SK-N-SH (cell line): ENCODE measurements at regions of chr6 and their contacts with region 1.

Region 1: GRCh38 chr6:44237813-44238433 is 9.0 kb upstream of the HSP90AB1 start:
- DNase-seq: peak; percentile 92
- H3K4me3 ChIP-seq: peak overlapping the region; percentile 53 to 62
- H3K27ac ChIP-seq: peak overlapping the region; percentile 84 to 90
- H3K4me1 ChIP-seq: peaks cover 26 to 45% of the 10 kb centered on the region in 2 experiments
- H3K27me3 ChIP-seq: no peaks in the 10 kb centered on the region
- CTCF ChIP-seq: peak; percentile 93
- EP300 ChIP-seq: no peak
- RAD21 ChIP-seq: peak; percentile 58

Region 2: DNA sequence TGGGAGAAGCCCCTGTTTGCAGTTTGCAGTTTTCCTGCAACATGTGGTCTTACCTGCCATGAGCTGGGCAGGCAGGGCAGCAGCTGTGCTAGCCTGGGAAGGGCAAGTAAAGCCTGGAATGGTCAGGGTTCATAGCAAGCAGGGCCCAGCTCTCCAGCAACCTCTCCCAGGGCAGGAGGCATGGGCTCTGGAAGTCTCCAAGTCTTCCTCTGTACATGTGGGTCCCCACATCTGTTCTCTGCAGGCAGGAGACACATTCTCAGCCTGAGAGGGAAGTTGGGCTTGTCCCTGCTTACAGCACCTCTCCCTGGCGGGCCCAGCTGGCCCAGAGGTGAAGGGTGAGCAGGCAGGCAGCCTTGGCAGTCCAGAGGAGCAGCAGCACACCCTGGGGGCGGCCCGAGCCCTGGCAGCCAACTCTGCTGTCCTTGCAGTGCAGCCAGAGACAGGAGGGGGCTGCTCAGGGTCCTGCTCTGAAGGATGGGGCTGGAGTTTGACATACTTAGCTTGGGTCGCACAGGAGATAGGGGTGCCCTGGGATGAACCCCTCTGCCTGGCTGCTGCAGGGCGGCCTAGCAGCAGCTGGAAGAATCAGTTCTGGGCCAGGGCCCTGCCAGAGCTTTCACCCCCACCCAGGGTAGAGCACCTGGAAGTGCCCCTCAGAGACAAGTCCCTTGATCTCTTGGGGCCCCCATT is 286.7 kb before region 1 on chr6:
- CTCF ChIA-PET with region 1: no interaction called
- POLR2A ChIA-PET with region 1: no interaction called
- DNase-seq: peak; percentile 83
- H3K4me3 ChIP-seq: no peak overlapping the region
- H3K27ac ChIP-seq: peak overlapping the region in 1 of 2 experiments; percentile 87; a peak in 2 of 4 replicates
- H3K4me1 ChIP-seq: peaks cover 0 to 47% of the 10 kb centered on the region in 2 experiments; a peak in 1 of 4 replicates
- H3K27me3 ChIP-seq: no peaks in the 10 kb centered on the region
- CTCF ChIP-seq: peak; percentile 34
- EP300 ChIP-seq: no peak; a peak in 2 of 4 replicates
- RAD21 ChIP-seq: peak; percentile 89

Region 3: GRCh38 chr6:44086931-44087574 is 150.9 kb before region 1 on chr6:
- CTCF ChIA-PET with region 1: interaction called, 21 read pairs
- POLR2A ChIA-PET with region 1: no interaction called
- DNase-seq: peak; percentile 80
- H3K4me3 ChIP-seq: no peak overlapping the region
- H3K27ac ChIP-seq: peak overlapping the region in 1 of 2 experiments; percentile 86; a peak in 2 of 4 replicates
- H3K4me1 ChIP-seq: peaks cover 0 to 51% of the 10 kb centered on the region in 2 experiments; a peak in 2 of 4 replicates
- H3K27me3 ChIP-seq: no peaks in the 10 kb centered on the region
- CTCF ChIP-seq: no peak
- EP300 ChIP-seq: no peak; a peak in 1 of 4 replicates
- RAD21 ChIP-seq: peak; percentile 42; the same call in 1 of the 2 replicates

Region 4: DNA sequence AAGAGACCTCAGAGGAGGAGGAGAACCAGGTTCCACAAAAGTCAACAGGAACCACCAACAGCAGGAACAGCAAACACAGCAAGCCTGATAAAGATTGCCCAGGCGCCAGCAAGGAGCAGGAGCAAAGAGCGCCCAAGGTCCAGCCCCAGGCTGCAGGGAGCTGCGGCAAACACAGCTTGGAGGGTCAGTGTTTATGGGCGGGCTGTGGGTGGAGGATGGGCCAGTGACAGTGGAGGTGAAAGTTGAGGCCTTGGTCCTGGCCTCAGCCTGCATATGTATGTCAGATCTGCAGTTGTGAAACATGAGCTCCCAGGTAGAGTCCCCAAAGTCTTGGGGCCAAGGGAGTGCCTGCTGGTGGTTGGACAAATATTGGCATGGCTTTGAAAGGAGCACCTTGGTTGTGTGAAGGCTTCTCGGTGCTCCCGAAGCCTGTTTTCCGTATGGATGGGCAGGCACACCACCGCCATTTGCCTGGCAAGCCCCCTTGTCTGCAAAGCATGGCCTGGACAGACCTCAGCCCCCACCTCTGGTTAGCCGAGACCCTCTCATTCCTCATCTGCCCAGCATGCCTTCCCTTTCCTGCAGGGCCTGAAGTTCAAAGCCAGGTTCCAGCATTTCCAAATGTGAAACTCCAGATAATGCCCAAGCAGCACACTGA is 81.3 kb before region 1 on chr6:
- CTCF ChIA-PET with region 1: interaction called, 16 read pairs
- POLR2A ChIA-PET with region 1: no interaction called
- DNase-seq: no peak
- H3K4me3 ChIP-seq: no peak overlapping the region
- H3K27ac ChIP-seq: no peak overlapping the region
- H3K4me1 ChIP-seq: peaks cover 0 to 2% of the 10 kb centered on the region in 2 experiments; a peak in 1 of 4 replicates
- H3K27me3 ChIP-seq: no peaks in the 10 kb centered on the region
- CTCF ChIP-seq: no peak
- EP300 ChIP-seq: no peak
- RAD21 ChIP-seq: no peak

Region 5: GRCh38 chr6:44180886-44181285 is 57.0 kb before region 1 on chr6:
- CTCF ChIA-PET with region 1: interaction called, 22 read pairs
- POLR2A ChIA-PET with region 1: no interaction called
- DNase-seq: no peak
- H3K4me3 ChIP-seq: no peak overlapping the region
- H3K27ac ChIP-seq: no peak overlapping the region
- H3K4me1 ChIP-seq: no peaks in the 10 kb centered on the region; a peak in 1 of 4 replicates
- H3K27me3 ChIP-seq: no peaks in the 10 kb centered on the region; the same call in 1 of the 2 replicates
- CTCF ChIP-seq: no peak
- EP300 ChIP-seq: no peak
- RAD21 ChIP-seq: no peak

Region 6: GRCh38 chr6:44211284-44211683 is 26.6 kb before region 1 on chr6:
- CTCF ChIA-PET with region 1: interaction called, 224 read pairs
- POLR2A ChIA-PET with region 1: no interaction called
- DNase-seq: no peak
- H3K4me3 ChIP-seq: no peak overlapping the region
- H3K27ac ChIP-seq: no peak overlapping the region
- H3K4me1 ChIP-seq: no peaks in the 10 kb centered on the region
- H3K27me3 ChIP-seq: no peaks in the 10 kb centered on the region
- CTCF ChIP-seq: no peak
- EP300 ChIP-seq: no peak
- RAD21 ChIP-seq: no peak

Region 7: GRCh38 chr6:44265007-44265721 is 27.2 kb after region 1 on chr6 and contains the start of gene NFKBIE:
- CTCF ChIA-PET with region 1: interaction called, 10 read pairs
- POLR2A ChIA-PET with region 1: no interaction called
- DNase-seq: peak; percentile 98
- H3K4me3 ChIP-seq: peak within 1 kb of the TSS; percentile 74 to 89
- H3K27ac ChIP-seq: peak within 1 kb of the TSS; percentile 56 to 62
- H3K4me1 ChIP-seq: peaks cover 16 to 35% of the 10 kb centered on the region in 2 experiments; a peak in 2 of 4 replicates
- H3K27me3 ChIP-seq: peaks cover 20% of the 10 kb centered on the region
- CTCF ChIP-seq: peak; percentile 53
- EP300 ChIP-seq: no peak
- RAD21 ChIP-seq: peak; percentile 52
- polyA plus RNA-seq, gene NFKBIE: 5.8 and 6.4 TPM in 2 replicates

Region 8: GRCh38 chr6:44278774-44279697 is 41.1 kb after region 1 on chr6:
- CTCF ChIA-PET with region 1: no interaction called
- POLR2A ChIA-PET with region 1: no interaction called
- DNase-seq: no peak
- H3K4me3 ChIP-seq: no peak overlapping the region
- H3K27ac ChIP-seq: no peak overlapping the region
- H3K4me1 ChIP-seq: no peaks in the 10 kb centered on the region
- H3K27me3 ChIP-seq: no peaks in the 10 kb centered on the region
- CTCF ChIP-seq: no peak
- EP300 ChIP-seq: no peak
- RAD21 ChIP-seq: no peak